PC-3 (cell line): ENCODE measurements at regions of chr1 and their contacts with region 1.

Region 1: GRCh38 chr1:153832293-153832692 is 57.1 kb downstream of the SLC27A3 start:
- DNase-seq: no peak
- ATAC-seq: no peak
- H3K4me3 ChIP-seq: no peak overlapping the region
- H3K27ac ChIP-seq: no peak overlapping the region
- H3K4me1 ChIP-seq: no peaks in the 10 kb centered on the region
- H3K27me3 ChIP-seq: no peaks in the 10 kb centered on the region
- CTCF ChIP-seq: no peak

Region 2: GRCh38 chr1:153872934-153873333 is 40.6 kb after region 1 on chr1:
- CTCF ChIA-PET with region 1: no interaction called
- POLR2A ChIA-PET with region 1: no interaction called
- intact Hi-C with region 1: loop called (anchors 2 kb)
- DNase-seq: no peak
- ATAC-seq: no peak
- H3K4me3 ChIP-seq: no peak overlapping the region
- H3K27ac ChIP-seq: no peak overlapping the region
- H3K4me1 ChIP-seq: no peaks in the 10 kb centered on the region
- H3K27me3 ChIP-seq: no peaks in the 10 kb centered on the region
- CTCF ChIP-seq: no peak